Gastrocnemius medialis (tissue), 4 donors: ENCODE measurements at regions of chr6 and their contacts with region 1.

Region 1: GRCh38 chr6:36979347-36979742 is 6.7 kb downstream of the MTCH1 start:
- DNase-seq: peak; percentile 26 to 62
- ATAC-seq: peak; percentile 63 to 68
- H3K4me3 ChIP-seq: no peak overlapping the region
- H3K27ac ChIP-seq: peak overlapping the region; percentile 44 to 70 (median 62)
- H3K4me1 ChIP-seq: peaks cover 41 to 47% of the 10 kb centered on the region in 2 donors
- H3K27me3 ChIP-seq: no peaks in the 10 kb centered on the region
- CTCF ChIP-seq: peak in 4 of 5 experiments; percentile 41 to 56 (median 48)
- POLR2A ChIP-seq: no peak

Region 2: DNA sequence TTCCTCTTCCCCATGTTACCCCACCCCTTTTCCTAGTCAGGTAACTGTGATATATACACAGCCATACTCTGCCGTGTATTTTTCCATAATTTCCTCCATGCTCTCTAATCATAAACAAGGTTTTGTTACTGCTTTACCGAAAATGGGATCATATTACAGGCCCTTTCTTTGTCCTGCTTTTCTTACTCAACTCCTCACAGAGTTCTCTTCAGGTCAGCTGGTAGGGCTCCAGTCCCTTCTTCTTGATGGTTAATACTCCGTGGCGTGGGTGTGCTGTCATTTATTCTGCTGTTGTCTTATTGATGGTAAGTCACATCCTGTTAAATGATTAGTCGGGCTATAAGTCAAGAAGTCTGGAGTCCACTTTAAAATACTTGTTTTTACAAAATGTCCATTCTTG is 49.7 kb before region 1 on chr6:
- in situ Hi-C with region 1: no loop called
- intact Hi-C with region 1: loop called (anchors 2 kb)
- DNase-seq: peak in 1 of 2 donors; percentile 54
- ATAC-seq: peak; percentile 47 to 55
- H3K4me3 ChIP-seq: no peak overlapping the region
- H3K27ac ChIP-seq: peak overlapping the region; percentile 72 to 89 (median 80)
- H3K4me1 ChIP-seq: peaks cover 38 to 40% of the 10 kb centered on the region in 2 donors
- H3K27me3 ChIP-seq: no peaks in the 10 kb centered on the region
- CTCF ChIP-seq: no peak
- POLR2A ChIP-seq: no peak

Region 3: GRCh38 chr6:37018198-37019064 is 39.1 kb after region 1 on chr6:
- in situ Hi-C with region 1: no loop called
- intact Hi-C with region 1: loop called (anchors 1 kb)
- DNase-seq: peak; percentile 79 to 90
- ATAC-seq: peak; percentile 96 to 98
- H3K4me3 ChIP-seq: no peak overlapping the region
- H3K27ac ChIP-seq: peak overlapping the region; percentile 40 to 67 (median 56)
- H3K4me1 ChIP-seq: peaks cover 9 to 11% of the 10 kb centered on the region in 2 donors
- H3K27me3 ChIP-seq: no peaks in the 10 kb centered on the region
- CTCF ChIP-seq: peak; percentile 84 to 95 (median 91)
- POLR2A ChIP-seq: no peak